Dorsolateral prefrontal cortex (tissue), 120 donors: ENCODE measurements at regions of chr2 and their contacts with region 1.

Region 1: DNA sequence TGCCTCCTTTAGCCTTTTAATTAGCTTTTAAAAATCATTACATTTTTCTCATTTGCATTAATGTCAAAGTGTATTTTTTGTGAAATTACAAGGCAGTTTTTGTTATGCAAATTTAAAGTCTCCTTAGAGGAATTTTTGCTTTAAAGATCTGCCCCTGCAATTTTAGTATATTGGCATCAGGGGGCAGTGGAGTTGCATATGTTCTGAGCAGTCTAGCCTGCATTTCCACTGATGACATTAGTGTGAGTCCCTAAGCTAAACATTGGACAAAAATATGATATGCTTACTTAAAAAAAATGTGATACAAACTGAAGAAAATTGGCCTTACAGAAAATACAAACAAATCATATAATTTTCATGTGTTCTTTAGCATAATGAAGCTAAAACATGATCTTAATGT is 426.5 kb downstream of the SLC4A3 start:
- DNase-seq: no peak
- H3K4me3 ChIP-seq: no peak overlapping the region
- H3K27ac ChIP-seq: no peak overlapping the region
- H3K27me3 ChIP-seq: no peaks in the 10 kb centered on the region
- CTCF ChIP-seq: no peak

Region 2: GRCh38 chr2:219581411-219581810 is 472.5 kb before region 1 on chr2:
- intact Hi-C with region 1: no loop called
- DNase-seq: no peak
- H3K4me3 ChIP-seq: no peak overlapping the region
- H3K27ac ChIP-seq: no peak overlapping the region
- H3K27me3 ChIP-seq: peaks cover 0 to 7% (median 0%) of the 10 kb centered on the region in 45 donors
- CTCF ChIP-seq: no peak

Region 3: GRCh38 chr2:219844401-219845091 is 209.4 kb before region 1 on chr2:
- intact Hi-C with region 1: no loop called
- DNase-seq: no peak
- H3K4me3 ChIP-seq: no peak overlapping the region
- H3K27ac ChIP-seq: no peak overlapping the region
- H3K27me3 ChIP-seq: peaks cover 0 to 3% (median 0%) of the 10 kb centered on the region in 45 donors
- CTCF ChIP-seq: no peak

Region 4: DNA sequence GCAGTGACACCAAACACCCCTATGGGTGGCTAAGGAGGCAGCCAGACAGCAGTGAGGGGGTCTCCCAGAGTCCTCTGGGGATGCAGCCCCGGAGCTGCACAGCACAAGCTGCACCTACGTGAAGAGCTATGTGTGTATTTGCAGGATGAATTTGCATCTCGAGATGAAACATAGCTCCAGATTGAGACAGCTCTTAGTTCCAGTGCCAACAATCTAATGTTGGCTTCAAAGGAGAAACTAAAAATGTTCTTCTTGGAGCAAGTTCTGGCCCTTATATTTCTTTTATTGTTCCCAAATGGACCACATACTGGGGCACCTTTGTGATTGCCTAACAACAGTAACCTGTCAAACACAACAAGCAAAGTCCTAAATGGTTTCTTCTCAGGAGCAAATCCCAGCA is 192.6 kb before region 1 on chr2:
- intact Hi-C with region 1: loop called in 1 of 2 experiments (anchors 5 kb)
- DNase-seq: peak in 1 of 10 donors; percentile 12
- H3K4me3 ChIP-seq: no peak overlapping the region
- H3K27ac ChIP-seq: peak overlapping the region in 50 of 59 donors; percentile 5 to 85 (median 67)
- H3K27me3 ChIP-seq: no peaks in the 10 kb centered on the region
- CTCF ChIP-seq: no peak

Region 5: GRCh38 chr2:219947575-219947974 is 106.3 kb before region 1 on chr2:
- intact Hi-C with region 1: no loop called
- DNase-seq: no peak
- H3K4me3 ChIP-seq: peak overlapping the region in 29 of 59 donors; percentile 1 to 54 (median 32)
- H3K27ac ChIP-seq: peak overlapping the region in 37 of 59 donors; percentile 4 to 70 (median 47)
- H3K27me3 ChIP-seq: peaks cover 0 to 11% (median 0%) of the 10 kb centered on the region in 45 donors
- CTCF ChIP-seq: no peak